CD8-positive, alpha-beta T cell (primary cell): ENCODE measurements at regions of chr4 and their contacts with region 1.

Region 1: DNA sequence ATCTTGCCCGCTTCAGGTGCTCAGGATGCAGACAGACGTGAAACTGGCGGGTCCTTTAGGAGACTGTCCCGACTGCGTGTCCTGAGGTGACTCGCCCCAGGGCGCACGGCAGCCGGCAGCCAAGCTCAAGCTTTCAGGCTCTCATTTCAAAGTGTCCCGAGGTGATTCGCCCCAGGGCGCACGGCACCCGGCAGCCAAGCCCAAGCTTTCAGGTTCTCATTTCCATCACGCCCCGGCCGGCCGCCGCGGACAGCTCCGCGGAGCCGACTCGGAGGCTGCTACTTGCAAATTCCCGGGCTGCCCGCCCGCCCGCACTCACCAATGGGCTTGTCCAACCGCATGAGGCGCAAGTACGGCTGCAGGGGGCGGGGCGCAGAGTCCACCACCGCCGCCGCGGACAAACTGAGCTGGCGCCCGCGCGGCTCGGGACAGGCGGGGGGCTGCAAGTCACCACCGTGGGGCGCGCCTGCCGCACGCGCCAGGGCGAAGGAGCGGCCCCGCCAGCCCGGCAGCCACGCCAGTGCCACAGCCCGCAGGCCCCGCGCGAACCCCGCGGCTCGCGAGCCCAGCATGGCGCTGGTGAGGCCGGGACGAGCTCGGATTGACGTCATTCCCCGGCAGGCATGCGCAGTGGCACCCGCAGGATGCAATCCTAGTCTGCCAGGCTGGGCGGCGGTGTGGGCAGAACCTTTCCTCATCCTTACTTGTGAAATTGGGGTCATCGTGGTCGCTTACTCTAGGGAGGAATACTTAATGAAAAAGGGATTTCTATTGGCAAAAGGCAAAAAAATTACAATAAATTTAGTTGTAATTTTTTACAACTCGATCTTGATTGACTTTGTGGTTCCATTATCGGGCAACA is at the start of gene COQ2:
- DNase-seq: peak; percentile 90 to 97 (median 95)
- ATAC-seq: peak; percentile 89
- H3K4me3 ChIP-seq: peak within 1 kb of the TSS; percentile 56 to 78
- H3K4me3 Mint-ChIP-seq: peak within 1 kb of the TSS; percentile 97
- H3K27ac ChIP-seq: peak within 1 kb of the TSS; percentile 71 to 84
- H3K27ac Mint-ChIP-seq: peak within 1 kb of the TSS; percentile 98
- H3K4me1 ChIP-seq: peaks cover 17% of the 10 kb centered on the region
- H3K4me1 Mint-ChIP-seq: peaks cover 35% of the 10 kb centered on the region
- H3K27me3 ChIP-seq: no peaks in the 10 kb centered on the region
- H3K27me3 Mint-ChIP-seq: no peaks in the 10 kb centered on the region
- CTCF ChIP-seq: no peak
- total RNA-seq, gene COQ2: 9.0 to 9.8 TPM

Region 2: DNA sequence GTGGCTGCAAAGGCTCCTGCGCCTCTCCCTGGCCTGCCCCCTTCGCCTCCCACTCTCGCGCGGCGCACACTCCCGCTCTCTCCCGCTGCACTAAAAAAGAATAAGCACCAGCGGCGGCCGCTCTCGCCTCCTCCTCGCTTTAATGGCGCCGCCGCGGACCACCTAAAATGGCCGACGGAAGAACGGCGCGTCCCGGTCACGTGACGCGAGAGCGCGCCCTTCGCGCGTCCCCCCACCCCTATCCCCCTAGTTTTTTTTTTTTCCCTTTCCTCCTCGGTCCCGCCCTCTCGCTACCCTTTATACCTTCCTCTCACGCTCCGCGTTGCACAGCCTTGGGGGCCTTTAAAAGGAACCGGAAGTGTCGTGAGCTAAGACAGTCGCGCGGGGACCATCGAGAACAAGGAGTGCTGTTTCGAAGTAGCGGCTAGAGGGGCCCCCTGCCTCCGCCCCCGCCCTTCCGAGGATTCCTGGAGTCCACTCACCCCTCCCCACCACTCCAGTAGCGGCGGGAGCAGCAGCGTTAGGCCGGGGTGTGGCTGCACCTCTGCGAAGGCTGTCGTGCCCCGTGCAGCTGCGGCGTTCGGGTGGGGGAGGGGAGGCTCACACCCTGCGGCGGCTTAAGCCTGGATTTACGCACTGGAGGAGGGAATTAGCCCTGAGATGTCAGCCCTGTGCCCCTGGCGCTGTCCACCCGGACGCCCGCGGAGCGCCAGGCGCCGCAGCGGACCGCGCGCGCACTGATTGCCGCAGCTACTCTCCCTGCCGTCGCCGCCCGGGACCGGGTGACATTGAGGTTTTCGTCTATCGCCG is 910.4 kb before region 1 on chr4 and contains the start of gene HNRNPD:
- CTCF ChIA-PET with region 1: no interaction called
- POLR2A ChIA-PET with region 1: no interaction called
- intact Hi-C with region 1: loop called (anchors 5 to 10 kb)
- DNase-seq: peak; percentile 76 to 99 (median 91)
- ATAC-seq: peak; percentile 83
- H3K4me3 ChIP-seq: peak within 1 kb of the TSS; percentile 94 to 98
- H3K4me3 Mint-ChIP-seq: peak within 1 kb of the TSS; percentile 100
- H3K27ac ChIP-seq: peak within 1 kb of the TSS; percentile 87 to 99
- H3K27ac Mint-ChIP-seq: peak within 1 kb of the TSS; percentile 100
- H3K4me1 ChIP-seq: peaks cover 34% of the 10 kb centered on the region
- H3K4me1 Mint-ChIP-seq: peaks cover 51% of the 10 kb centered on the region
- H3K27me3 ChIP-seq: no peaks in the 10 kb centered on the region
- H3K27me3 Mint-ChIP-seq: no peaks in the 10 kb centered on the region
- CTCF ChIP-seq: no peak
- total RNA-seq, gene HNRNPD: 245 to 248 TPM

Region 3: GRCh38 chr4:82851885-82852750 is 432.3 kb before region 1 on chr4:
- CTCF ChIA-PET with region 1: interaction called, 8 read pairs
- POLR2A ChIA-PET with region 1: no interaction called
- intact Hi-C with region 1: loop called in 1 of 2 experiments (anchors 2 kb)
- DNase-seq: peak in 2 of 9 experiments; percentile 46 to 60
- ATAC-seq: peak; percentile 54
- H3K4me3 ChIP-seq: no peak overlapping the region
- H3K4me3 Mint-ChIP-seq: no peak overlapping the region
- H3K27ac ChIP-seq: no peak overlapping the region
- H3K27ac Mint-ChIP-seq: no peak overlapping the region
- H3K4me1 ChIP-seq: no peaks in the 10 kb centered on the region
- H3K4me1 Mint-ChIP-seq: no peaks in the 10 kb centered on the region
- H3K27me3 ChIP-seq: no peaks in the 10 kb centered on the region
- H3K27me3 Mint-ChIP-seq: no peaks in the 10 kb centered on the region
- CTCF ChIP-seq: peak; percentile 65

Region 4: GRCh38 chr4:83012687-83013419 is 271.6 kb before region 1 on chr4:
- CTCF ChIA-PET with region 1: interaction called, 4 read pairs
- POLR2A ChIA-PET with region 1: no interaction called
- intact Hi-C with region 1: loop called (anchors 1 to 2 kb)
- DNase-seq: peak; percentile 94 to 98 (median 96)
- ATAC-seq: peak; percentile 88
- H3K4me3 ChIP-seq: peak overlapping the region; percentile 54 to 69
- H3K4me3 Mint-ChIP-seq: peak overlapping the region; percentile 90
- H3K27ac ChIP-seq: peak overlapping the region; percentile 56 to 95
- H3K27ac Mint-ChIP-seq: peak overlapping the region; percentile 91
- H3K4me1 ChIP-seq: peaks cover 31% of the 10 kb centered on the region
- H3K4me1 Mint-ChIP-seq: peaks cover 40% of the 10 kb centered on the region
- H3K27me3 ChIP-seq: no peaks in the 10 kb centered on the region
- H3K27me3 Mint-ChIP-seq: no peaks in the 10 kb centered on the region
- CTCF ChIP-seq: peak; percentile 65

Region 5: DNA sequence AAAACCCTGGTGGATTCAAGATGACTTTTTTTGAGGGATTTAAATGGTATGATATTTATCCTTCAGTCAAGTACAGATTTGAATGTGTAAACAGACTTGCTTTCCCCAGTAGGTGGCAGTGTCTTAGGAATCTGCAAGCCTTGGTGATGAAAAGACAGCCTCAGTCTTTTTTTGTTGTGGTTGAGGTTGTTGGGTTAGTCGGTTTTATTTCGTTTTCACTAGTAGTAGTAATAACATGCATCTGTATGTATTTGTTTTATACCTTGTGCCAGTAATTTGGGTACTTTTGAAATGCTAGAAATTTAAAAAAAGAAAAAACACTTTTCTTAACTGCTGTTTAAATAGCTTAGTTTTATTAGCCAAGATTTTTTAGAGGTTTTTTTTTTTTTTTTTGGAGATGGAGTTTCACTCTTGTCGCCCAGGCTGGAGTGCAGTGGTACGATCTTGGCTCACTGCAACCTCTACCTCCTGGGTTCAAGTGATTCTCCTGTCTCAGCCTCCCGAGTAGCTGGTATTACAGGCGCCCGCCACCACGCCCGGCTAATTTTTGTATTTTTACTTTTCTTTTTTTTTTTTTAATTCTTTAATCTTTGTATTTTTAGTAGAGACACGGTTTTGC is 210.2 kb before region 1 on chr4:
- CTCF ChIA-PET with region 1: interaction called, 23 read pairs
- POLR2A ChIA-PET with region 1: interaction called, 3 read pairs
- intact Hi-C with region 1: loop called (anchors 1 to 2 kb)
- DNase-seq: peak in 8 of 9 experiments; percentile 27 to 94 (median 62)
- ATAC-seq: peak; percentile 97
- H3K4me3 ChIP-seq: peak overlapping the region in 1 of 2 experiments; percentile 18
- H3K4me3 Mint-ChIP-seq: peak overlapping the region; percentile 78
- H3K27ac ChIP-seq: peak overlapping the region in 1 of 2 experiments; percentile 2
- H3K27ac Mint-ChIP-seq: peak overlapping the region; percentile 83
- H3K4me1 ChIP-seq: peaks cover 3% of the 10 kb centered on the region
- H3K4me1 Mint-ChIP-seq: peaks cover 4% of the 10 kb centered on the region
- H3K27me3 ChIP-seq: no peaks in the 10 kb centered on the region
- H3K27me3 Mint-ChIP-seq: no peaks in the 10 kb centered on the region
- CTCF ChIP-seq: peak; percentile 83

Region 6: DNA sequence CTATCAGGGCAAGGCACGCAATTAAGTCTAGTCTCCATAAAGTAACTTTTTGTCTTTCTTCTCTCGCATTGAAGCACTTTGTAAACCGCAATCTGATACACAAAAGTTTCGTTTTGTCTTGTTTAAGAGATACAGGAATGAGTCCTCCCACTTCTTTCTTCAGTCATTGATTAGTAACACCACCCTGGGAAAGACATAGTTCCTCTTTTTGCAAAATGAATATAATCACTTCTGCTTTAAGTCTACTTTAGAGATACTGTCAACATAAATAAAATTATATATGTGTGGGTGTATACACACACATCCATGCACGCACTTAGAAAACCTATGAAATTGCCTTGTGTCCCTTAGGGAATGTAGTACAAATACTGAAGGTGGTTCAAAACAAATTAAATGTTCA is 11.5 kb before region 1 on chr4:
- CTCF ChIA-PET with region 1: interaction called, 22 read pairs
- POLR2A ChIA-PET with region 1: interaction called, 8 read pairs
- intact Hi-C with region 1: no loop called
- DNase-seq: no peak
- ATAC-seq: no peak
- H3K4me3 ChIP-seq: no peak overlapping the region
- H3K4me3 Mint-ChIP-seq: no peak overlapping the region
- H3K27ac ChIP-seq: no peak overlapping the region
- H3K27ac Mint-ChIP-seq: no peak overlapping the region
- H3K4me1 ChIP-seq: no peaks in the 10 kb centered on the region
- H3K4me1 Mint-ChIP-seq: peaks cover 9% of the 10 kb centered on the region
- H3K27me3 ChIP-seq: no peaks in the 10 kb centered on the region
- H3K27me3 Mint-ChIP-seq: no peaks in the 10 kb centered on the region
- CTCF ChIP-seq: no peak

Region 7: DNA sequence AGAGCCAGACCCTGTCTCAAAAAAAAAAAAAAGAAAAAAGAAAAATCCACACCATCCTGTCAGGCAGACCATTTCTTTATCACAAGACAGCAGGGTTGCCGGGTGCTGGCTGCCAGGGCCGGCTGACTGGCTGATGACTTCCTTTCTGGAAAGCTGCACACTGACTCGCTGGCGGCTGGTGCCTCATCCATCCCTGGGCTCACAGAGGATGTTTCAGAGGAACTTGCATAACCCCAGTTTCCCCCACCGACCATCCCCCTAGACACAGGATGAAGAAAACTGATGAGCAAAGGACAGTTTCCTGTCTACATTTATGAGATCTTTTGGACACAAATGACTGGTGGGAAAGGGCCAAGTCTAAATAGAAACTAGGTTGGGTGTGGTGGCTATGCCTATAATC is 36.1 kb after region 1 on chr4:
- CTCF ChIA-PET with region 1: no interaction called
- POLR2A ChIA-PET with region 1: no interaction called
- intact Hi-C with region 1: no loop called
- DNase-seq: peak in 1 of 9 experiments; percentile 35
- ATAC-seq: no peak
- H3K4me3 ChIP-seq: no peak overlapping the region
- H3K4me3 Mint-ChIP-seq: no peak overlapping the region
- H3K27ac ChIP-seq: no peak overlapping the region
- H3K27ac Mint-ChIP-seq: no peak overlapping the region
- H3K4me1 ChIP-seq: peaks cover 6% of the 10 kb centered on the region
- H3K4me1 Mint-ChIP-seq: peaks cover 6% of the 10 kb centered on the region
- H3K27me3 ChIP-seq: no peaks in the 10 kb centered on the region
- H3K27me3 Mint-ChIP-seq: no peaks in the 10 kb centered on the region
- CTCF ChIP-seq: no peak

Region 8: GRCh38 chr4:83484500-83485461 is 200.4 kb after region 1 on chr4 and contains the start of gene ABRAXAS1:
- CTCF ChIA-PET with region 1: no interaction called
- POLR2A ChIA-PET with region 1: interaction called, 3 read pairs
- intact Hi-C with region 1: loop called (anchors 1 kb)
- DNase-seq: peak; percentile 89 to 97 (median 94)
- ATAC-seq: peak; percentile 95
- H3K4me3 ChIP-seq: peak within 1 kb of the TSS; percentile 77 to 81
- H3K4me3 Mint-ChIP-seq: peak within 1 kb of the TSS; percentile 96
- H3K27ac ChIP-seq: peak within 1 kb of the TSS; percentile 71 to 72
- H3K27ac Mint-ChIP-seq: peak within 1 kb of the TSS; percentile 96
- H3K4me1 ChIP-seq: peaks cover 10% of the 10 kb centered on the region
- H3K4me1 Mint-ChIP-seq: peaks cover 35% of the 10 kb centered on the region
- H3K27me3 ChIP-seq: no peaks in the 10 kb centered on the region
- H3K27me3 Mint-ChIP-seq: no peaks in the 10 kb centered on the region
- CTCF ChIP-seq: no peak
- total RNA-seq, gene ABRAXAS1: 13.9 to 17.2 TPM